Tibial artery (tissue), 4 donors: ENCODE measurements at regions of chr1 and their contacts with region 1.

Region 1: GRCh38 chr1:155208541-155209311 is at the start of gene MTX1:
- DNase-seq: peak; percentile 93 to 97
- H3K4me3 ChIP-seq: peak within 1 kb of the TSS; percentile 64 to 72
- H3K27ac ChIP-seq: peak within 1 kb of the TSS; percentile 98 to 99
- H3K4me1 ChIP-seq: peaks cover 0 to 52% (median 36%) of the 10 kb centered on the region in 4 donors
- H3K27me3 ChIP-seq: no peaks in the 10 kb centered on the region
- CTCF ChIP-seq: no peak

Region 2: GRCh38 chr1:155244368-155245162 is 35.8 kb after region 1 on chr1:
- intact Hi-C with region 1: loop called (anchors 5 kb)
- DNase-seq: peak; percentile 99
- H3K4me3 ChIP-seq: peak overlapping the region; percentile 59 to 83
- H3K27ac ChIP-seq: peak overlapping the region; percentile 94 to 96
- H3K4me1 ChIP-seq: peaks cover 0 to 44% (median 26%) of the 10 kb centered on the region in 4 donors
- H3K27me3 ChIP-seq: no peaks in the 10 kb centered on the region
- CTCF ChIP-seq: peak; percentile 14 to 98